ENCODE measurements at regions of chr3 and their contacts with region 1.

Region 1: DNA sequence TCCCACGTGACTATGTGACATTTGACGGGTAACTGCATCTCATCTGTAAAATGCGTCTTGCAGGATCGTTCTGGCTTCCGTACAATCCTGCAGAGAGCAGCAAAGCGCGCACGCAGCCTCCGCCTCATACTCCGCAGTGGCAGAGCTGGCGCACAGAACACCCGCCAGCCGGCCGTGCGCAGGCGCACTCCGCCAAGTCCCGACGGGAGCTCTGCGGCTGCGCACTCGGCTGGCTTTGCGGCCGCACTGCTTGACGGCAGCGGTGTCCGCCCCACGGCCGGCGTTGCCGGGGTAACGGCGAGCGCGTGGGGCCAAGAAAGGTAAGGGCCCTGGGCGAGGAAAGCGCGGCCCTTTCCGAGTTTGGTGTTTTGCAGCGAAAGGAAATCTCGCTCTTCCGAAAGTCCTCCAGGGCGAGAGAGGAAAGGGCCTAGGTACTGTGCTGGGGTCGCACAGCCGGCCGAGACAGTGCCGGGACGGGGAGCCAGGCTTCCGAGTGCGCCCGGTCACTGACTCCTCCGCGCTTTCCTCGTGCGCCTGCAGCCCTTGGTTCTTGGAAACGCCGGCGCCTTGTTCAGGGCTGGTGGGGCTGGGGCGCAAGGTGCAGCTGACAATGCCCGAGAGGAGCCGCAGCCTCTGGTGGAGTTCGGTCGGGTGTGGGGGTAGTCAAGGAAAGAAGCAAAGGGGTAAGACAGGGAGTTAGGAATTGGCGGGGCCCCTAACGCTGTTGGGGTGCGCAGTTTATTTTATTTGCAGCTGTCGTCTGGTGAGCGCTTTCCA is at the start of gene TSEN2:
- DNase-seq: peak; percentile 99
- CTCF ChIP-seq: peak; percentile 37

Region 2: GRCh38 chr3:12143949-12144504 is 340.4 kb before region 1 on chr3:
- CTCF ChIA-PET with region 1: interaction called, 278 read pairs
- POLR2A ChIA-PET with region 1: no interaction called
- DNase-seq: no peak
- CTCF ChIP-seq: no peak

Region 3: GRCh38 chr3:12224181-12225147 is 259.9 kb before region 1 on chr3:
- CTCF ChIA-PET with region 1: no interaction called
- POLR2A ChIA-PET with region 1: no interaction called
- DNase-seq: no peak
- CTCF ChIP-seq: no peak

Region 4: GRCh38 chr3:12471243-12471651 is 13.1 kb before region 1 on chr3:
- CTCF ChIA-PET with region 1: interaction called, 34 read pairs
- POLR2A ChIA-PET with region 1: interaction called, 4 read pairs
- DNase-seq: no peak
- CTCF ChIP-seq: no peak

Region 5: GRCh38 chr3:12663936-12664908 is 179.8 kb after region 1 on chr3 and contains the start of gene RAF1:
- CTCF ChIA-PET with region 1: no interaction called
- POLR2A ChIA-PET with region 1: no interaction called
- DNase-seq: peak; percentile 98
- CTCF ChIP-seq: no peak

Region 6: GRCh38 chr3:13045904-13046568 is 561.6 kb after region 1 on chr3:
- CTCF ChIA-PET with region 1: no interaction called
- POLR2A ChIA-PET with region 1: no interaction called
- DNase-seq: peak; percentile 83
- CTCF ChIP-seq: no peak